Activated CD8-positive, alpha-beta memory T cell treated with anti-CD3 and anti-CD28 coated beads, Interleukin-2, amount 10 ng/mL, durations not matched to agents 7 days and 5 days (primary cell): ENCODE measurements at regions of chr22 and their contacts with region 1.

Region 1: GRCh38 chr22:18024276-18024947 is at the start of gene MICAL3:
- DNase-seq: peak; percentile 74
- ATAC-seq: peak; percentile 94
- H3K4me3 Mint-ChIP-seq: peak within 1 kb of the TSS; percentile 76
- H3K27ac Mint-ChIP-seq: no peak within 1 kb of the TSS
- H3K4me1 Mint-ChIP-seq: peaks cover 19% of the 10 kb centered on the region
- H3K27me3 Mint-ChIP-seq: peaks cover 64% of the 10 kb centered on the region
- total RNA-seq, gene MICAL3: 38.8 to 41.7 TPM

Region 2: GRCh38 chr22:17830043-17830961 is 194.1 kb before region 1 on chr22:
- CTCF ChIA-PET with region 1: interaction called, 42 read pairs
- DNase-seq: peak; percentile 85
- ATAC-seq: peak; percentile 95
- H3K4me3 Mint-ChIP-seq: no peak overlapping the region
- H3K27ac Mint-ChIP-seq: no peak overlapping the region
- H3K4me1 Mint-ChIP-seq: no peaks in the 10 kb centered on the region
- H3K27me3 Mint-ChIP-seq: no peaks in the 10 kb centered on the region

Region 3: GRCh38 chr22:17988800-17989513 is 35.5 kb before region 1 on chr22:
- CTCF ChIA-PET with region 1: no interaction called
- DNase-seq: no peak
- ATAC-seq: no peak
- H3K4me3 Mint-ChIP-seq: no peak overlapping the region
- H3K27ac Mint-ChIP-seq: no peak overlapping the region
- H3K4me1 Mint-ChIP-seq: peaks cover 19% of the 10 kb centered on the region
- H3K27me3 Mint-ChIP-seq: no peaks in the 10 kb centered on the region